Posterior vena cava (tissue), 2 donors: ENCODE measurements at regions of chr1 and their contacts with region 1.

Region 1: GRCh38 chr1:27314737-27315136 is 7.2 kb upstream of the TMEM222 start:
- DNase-seq: peak; percentile 7

Region 2: DNA sequence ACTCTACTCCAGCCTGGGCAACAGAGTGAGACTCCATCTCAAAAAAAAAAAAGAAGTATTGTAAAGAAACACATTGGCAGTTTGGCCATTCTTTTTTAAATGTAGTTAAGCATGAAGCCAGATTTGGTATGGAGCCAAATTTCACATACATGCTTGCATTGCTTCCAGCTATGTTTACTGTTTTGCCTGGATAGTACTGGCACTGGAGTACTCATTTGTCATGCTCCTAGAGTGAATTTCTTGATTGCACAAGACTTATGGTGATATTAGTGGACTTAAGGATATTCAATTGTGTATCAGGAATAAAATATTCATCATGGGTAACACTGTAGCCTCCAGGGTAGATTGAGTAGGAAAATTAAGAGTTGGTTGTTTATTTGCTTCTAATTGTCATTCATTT is 135.4 kb before region 1 on chr1:
- intact Hi-C with region 1: no loop called
- DNase-seq: no peak

Region 3: GRCh38 chr1:27330786-27331451 is 16.2 kb after region 1 on chr1:
- intact Hi-C with region 1: no loop called
- DNase-seq: peak; percentile 64

Region 4: DNA sequence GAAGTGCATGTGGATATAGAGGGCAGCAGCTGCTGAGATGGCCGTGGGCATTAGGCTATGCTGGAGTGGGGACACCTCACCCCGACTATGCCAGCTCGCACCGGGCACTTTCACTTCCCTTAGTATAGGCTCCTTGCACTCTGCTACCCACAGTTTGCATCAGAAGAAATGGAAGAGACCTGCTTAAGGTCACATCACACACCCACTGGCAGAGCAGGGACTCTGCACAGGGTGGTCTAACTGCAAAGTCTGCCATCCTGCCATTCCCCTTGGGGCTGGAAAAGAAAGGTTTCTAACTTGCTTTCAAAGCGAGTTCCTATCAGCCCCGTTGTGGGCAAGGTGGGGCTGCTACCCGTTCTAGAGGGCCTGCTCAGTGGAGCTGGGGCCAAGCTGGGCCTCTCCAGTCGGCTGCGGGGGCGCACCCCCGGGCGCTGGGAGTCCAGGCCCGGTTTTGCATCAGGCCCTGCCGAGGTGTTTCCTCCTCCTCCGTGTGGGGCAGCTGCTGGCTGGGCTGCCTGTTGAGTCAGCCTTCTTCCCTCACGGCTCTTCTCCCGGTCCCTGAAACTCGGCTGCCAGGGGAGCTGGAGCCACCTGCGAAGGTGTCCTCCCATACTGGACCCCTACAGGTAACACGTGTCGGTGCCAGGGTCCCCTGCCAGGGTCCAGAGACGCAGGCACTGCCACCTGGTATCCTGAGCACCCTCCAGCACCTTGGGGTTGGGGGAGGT is 27.0 kb after region 1 on chr1 and contains the start of gene SYTL1:
- intact Hi-C with region 1: loop called in 1 of 2 experiments (anchors 1 kb)
- DNase-seq: peak; percentile 83
- total RNA-seq, gene SYTL1: 1.6 to 1.9 TPM

Region 5: GRCh38 chr1:27752360-27752759 is 437.6 kb after region 1 on chr1:
- intact Hi-C with region 1: no loop called
- DNase-seq: no peak

Region 6: DNA sequence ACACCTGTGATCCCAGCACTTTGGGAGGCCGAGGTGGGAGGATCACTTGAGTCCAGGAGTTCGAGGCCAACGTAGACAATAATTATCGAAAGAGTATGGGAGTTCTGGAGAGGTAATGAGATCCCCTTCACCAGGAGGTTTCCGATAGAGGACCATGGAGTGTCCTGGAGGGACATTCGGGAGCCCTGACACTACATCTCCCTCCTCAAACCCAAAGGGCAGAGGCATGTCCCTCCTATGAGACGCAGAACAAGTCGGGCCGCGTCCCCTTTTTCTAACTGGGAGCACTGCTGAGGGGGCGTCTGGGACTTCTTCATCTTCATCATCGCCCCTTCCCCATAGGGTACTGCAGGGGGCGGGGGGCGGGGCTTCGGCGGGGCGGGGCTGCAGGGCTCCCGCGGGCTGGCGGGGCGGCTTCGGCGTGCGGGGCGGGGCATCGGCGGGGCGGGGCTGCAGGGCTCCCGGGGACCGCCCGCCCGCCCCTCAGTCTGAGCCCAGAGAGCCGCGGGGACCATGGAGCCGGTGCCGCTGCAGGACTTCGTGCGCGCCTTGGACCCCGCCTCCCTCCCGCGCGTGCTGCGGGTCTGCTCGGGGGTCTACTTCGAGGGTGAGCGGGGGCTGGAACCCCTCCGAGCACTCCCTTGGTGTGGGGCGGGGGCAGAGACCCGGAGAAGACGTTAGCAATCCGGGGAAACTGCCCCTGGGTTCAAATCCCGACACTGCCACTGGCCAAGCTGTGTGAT is 557.5 kb after region 1 on chr1 and contains the start of gene THEMIS2:
- intact Hi-C with region 1: no loop called
- DNase-seq: peak; percentile 92
- total RNA-seq, gene THEMIS2: 21.0 to 34.7 TPM